Head of caudate nucleus (tissue), 42 donors: ENCODE measurements at regions of chr1 and their contacts with region 1.

Region 1: DNA sequence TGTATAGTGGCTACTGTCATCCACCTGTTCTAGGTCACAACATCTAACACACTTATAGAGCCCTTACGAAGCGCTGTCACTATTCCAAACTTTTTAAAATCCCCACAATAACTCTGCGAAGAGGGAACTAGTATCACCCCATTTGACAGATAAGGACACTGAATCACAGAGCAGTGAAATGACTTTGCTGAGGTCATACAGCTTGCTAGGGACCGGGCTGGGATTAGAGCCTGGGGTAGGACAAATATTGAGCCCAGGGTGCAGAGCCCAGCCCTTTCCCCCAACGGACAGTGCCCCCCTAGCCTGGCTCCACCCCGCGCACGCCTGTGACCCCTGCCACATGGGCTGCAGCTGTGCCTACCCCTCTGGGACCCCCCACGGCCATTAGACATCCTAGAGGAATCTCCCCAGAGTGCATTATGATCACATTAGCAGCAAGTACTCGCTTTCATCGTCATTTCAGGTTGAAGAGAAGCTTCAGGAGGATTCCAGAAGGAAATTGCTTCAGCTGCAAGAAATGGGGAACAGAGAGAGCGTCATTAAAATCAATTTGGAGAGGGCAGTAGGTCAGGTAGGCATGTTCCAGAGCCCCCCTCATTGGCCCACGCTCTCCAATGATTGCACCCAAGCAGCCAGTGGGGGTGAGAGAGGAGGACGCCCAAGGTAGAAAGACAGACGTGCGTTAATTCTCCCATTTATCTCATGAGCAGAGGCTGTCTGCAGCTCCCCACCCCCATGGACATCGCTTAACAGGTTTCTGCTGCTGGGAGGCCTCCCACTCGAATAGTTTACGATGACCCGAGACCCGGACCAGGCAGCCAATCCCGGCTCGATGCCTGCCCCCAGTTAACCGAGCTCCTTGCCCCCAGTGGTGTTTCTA is 77.2 kb downstream of the FHAD1 start:
- DNase-seq: no peak

Region 2: DNA sequence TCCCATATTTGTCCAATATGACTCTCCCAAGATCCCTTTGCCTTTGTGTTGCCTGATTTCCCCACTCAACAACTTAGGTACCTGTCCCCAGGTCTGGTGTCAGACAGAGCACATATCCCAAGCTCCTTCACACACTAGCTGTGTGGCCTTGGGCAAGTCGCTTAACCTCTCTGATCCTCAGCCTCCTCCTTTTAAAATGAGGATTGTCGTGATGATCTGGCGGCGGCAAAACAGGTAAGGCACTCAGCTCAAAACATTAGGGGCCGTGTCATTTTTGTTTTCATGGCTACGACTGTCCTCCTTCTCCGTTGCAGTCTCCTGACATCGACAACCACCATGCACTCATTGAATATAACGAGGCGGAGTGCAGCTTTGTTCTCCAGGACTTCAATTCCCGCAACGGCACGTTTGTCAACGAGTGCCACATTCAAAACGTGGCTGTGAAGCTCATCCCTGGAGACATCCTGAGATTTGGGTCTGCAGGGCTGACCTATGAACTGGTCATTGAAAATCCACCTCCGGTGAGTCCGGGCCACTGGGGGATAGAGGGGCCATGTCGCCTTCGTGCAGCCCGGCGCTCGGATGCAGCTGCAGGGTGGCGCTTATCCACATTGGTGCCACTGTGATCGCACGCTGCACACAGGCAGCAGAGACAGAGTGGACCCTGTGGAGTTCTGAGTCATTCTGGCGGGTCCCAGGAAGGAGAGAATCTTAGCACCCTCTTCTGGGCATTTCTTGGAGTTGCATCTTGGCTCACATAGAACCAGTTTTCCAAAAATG is 52.0 kb before region 1 on chr1:
- intact Hi-C with region 1: no loop called
- DNase-seq: peak; percentile 19 to 88 (median 62)

Region 3: GRCh38 chr1:15430787-15431570 is 106.8 kb after region 1 on chr1:
- intact Hi-C with region 1: loop called (anchors 2 kb)
- DNase-seq: peak in 41 of 42 donors; percentile 63 to 92 (median 81)